A673 (cell line): ENCODE measurements at regions of chr3 and their contacts with region 1.

Region 1: DNA sequence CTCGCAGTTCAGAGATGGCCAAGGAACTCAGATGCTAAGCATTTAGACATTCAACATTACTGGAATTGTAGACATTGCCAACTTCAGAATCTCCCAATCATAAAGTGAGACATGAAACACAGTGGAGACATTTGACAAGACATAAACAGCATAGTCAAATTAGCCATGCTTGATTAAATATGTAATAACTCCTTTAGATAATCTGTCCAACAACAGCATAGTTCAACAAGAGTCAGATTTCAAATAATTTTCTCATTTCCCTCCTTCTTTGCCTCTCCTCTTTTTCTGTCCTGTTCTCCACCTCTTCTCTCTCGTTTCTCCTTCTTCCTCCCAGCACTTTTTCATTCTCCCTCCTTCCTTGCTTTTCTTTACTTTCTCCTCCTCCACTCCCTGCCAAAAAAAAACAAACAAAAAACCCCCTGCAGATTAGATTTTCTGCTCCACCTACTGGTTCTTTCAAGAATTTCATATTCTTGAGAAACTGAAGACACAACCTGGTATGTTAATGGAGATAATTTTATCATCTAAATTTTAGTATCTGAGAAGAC is 20.2 kb downstream of the CPOX start:
- DNase-seq: peak; percentile 55
- H3K4me3 ChIP-seq: no peak overlapping the region
- H3K27ac ChIP-seq: no peak overlapping the region
- H3K4me1 ChIP-seq: no peaks in the 10 kb centered on the region
- H3K27me3 ChIP-seq: no peaks in the 10 kb centered on the region
- CTCF ChIP-seq: peak; percentile 61

Region 2: DNA sequence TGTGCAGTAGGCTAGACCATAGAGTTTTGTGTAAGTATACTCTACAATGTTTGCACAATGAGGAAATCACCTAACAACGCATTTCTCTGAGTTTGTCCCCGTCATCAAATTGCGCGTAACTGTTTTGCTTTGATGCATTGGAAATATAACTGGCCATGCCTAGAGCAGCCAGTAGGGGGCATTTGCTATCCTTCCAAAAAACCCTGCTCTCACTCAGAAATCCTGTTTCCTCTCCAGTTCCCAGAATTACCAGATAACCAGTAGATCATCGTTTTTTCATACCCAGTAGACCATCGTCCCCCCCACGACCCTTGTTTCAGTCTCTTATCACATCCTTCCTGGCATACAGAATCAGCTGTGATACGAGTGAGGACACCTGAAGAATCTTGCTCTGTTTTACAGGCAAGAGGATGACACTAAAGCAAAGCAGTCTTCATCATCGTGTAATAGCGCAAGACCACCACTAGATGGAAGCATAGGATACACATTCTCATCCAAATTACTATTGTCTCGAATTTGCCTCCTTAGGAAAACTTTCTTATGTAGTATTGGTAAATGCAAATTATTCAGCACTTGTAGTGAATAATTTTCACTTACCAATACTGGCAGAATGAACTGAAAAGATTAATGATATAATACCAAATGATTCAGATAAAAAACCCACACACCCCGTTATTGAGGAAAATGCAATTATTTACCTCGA is 533.8 kb before region 1 on chr3:
- CTCF ChIA-PET with region 1: no interaction called
- POLR2A ChIA-PET with region 1: no interaction called
- intact Hi-C with region 1: loop called (anchors 1 kb)
- DNase-seq: peak; percentile 86
- H3K4me3 ChIP-seq: peak overlapping the region; percentile 28
- H3K27ac ChIP-seq: no peak overlapping the region
- H3K4me1 ChIP-seq: no peaks in the 10 kb centered on the region
- H3K27me3 ChIP-seq: peaks cover 27% of the 10 kb centered on the region
- CTCF ChIP-seq: peak; percentile 93

Region 3: GRCh38 chr3:98343647-98344507 is 229.4 kb before region 1 on chr3:
- CTCF ChIA-PET with region 1: no interaction called
- POLR2A ChIA-PET with region 1: no interaction called
- intact Hi-C with region 1: loop called (anchors 5 kb)
- DNase-seq: peak; percentile 72
- H3K4me3 ChIP-seq: no peak overlapping the region
- H3K27ac ChIP-seq: no peak overlapping the region
- H3K4me1 ChIP-seq: no peaks in the 10 kb centered on the region
- H3K27me3 ChIP-seq: peaks cover 29% of the 10 kb centered on the region
- CTCF ChIP-seq: peak; percentile 83